Body of pancreas (tissue), 4 donors: ENCODE measurements at regions of chr10 and their contacts with region 1.

Region 1: DNA sequence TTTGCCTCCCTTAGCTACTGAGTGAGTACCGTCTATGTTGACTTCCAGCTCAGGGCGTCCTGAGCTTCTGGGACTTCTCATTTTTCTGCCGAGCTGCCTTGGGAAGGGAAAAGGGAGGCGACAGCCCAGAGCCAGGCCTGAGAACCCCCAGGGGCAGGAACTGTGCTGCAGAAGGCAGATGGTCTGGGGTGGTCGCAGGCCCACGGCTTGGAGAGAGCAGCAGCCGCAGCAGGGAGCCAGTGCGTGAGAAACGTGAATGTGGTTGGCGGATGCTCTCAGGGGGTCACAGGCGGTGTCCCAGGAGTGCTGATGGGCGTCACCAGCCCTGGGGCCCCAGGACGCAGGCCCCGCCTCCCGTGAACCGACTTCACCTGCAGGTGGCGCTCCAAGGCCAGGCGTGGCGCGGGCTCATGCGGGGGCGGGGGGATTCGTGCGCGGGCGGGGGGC is 9.2 kb upstream of the PWWP2B start:
- DNase-seq: peak; percentile 68 to 82 (median 78)
- ATAC-seq: peak; percentile 53
- H3K4me3 ChIP-seq: no peak overlapping the region
- H3K27ac ChIP-seq: peak overlapping the region in 2 of 4 donors; percentile 41 to 55
- H3K4me1 ChIP-seq: peaks cover 18% of the 10 kb centered on the region
- H3K27me3 ChIP-seq: no peaks in the 10 kb centered on the region
- CTCF ChIP-seq: peak; percentile 49 to 83 (median 73)
- POLR2A ChIP-seq: no peak

Region 2: DNA sequence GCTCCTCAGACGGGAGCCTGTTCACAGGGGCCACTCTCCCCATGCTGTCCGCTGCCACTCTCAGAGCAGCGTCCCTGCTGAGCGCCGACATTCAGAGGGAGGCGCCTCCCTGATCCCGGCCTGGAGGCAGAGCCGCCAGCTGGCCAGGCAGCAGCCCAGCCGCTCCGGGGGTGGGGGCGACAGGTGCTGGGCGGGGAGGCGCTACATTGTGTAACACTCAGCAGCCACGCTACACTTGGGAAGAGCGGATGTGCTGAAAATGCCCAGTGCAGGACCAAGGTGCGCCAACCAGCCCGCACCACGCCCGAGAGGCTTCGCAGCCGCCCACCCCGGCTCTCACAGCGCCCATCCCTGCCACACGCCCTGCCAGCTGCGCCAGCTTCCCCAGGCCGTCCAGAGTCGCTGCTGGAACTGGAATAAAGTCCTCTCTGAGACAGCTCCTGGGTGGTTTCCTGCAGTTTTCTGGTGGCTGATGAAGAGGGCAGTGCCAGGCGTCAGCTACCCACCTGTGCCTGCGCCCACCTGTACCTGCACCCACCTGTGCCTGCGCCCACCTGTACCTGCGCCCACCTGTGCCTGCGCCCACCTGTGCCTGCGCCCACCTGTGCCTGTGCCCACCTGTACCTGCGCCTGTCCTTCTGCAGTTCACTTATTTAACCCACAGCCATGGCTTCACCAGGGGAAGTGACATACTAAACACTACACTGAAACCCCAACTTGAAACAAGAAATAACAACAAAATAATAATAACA is 105.7 kb before region 1 on chr10:
- intact Hi-C with region 1: no loop called
- DNase-seq: no peak
- ATAC-seq: no peak
- H3K4me3 ChIP-seq: no peak overlapping the region
- H3K27ac ChIP-seq: no peak overlapping the region
- H3K4me1 ChIP-seq: no peaks in the 10 kb centered on the region
- H3K27me3 ChIP-seq: no peaks in the 10 kb centered on the region
- CTCF ChIP-seq: no peak
- POLR2A ChIP-seq: no peak

Region 3: GRCh38 chr10:132452631-132453469 is 65.1 kb after region 1 on chr10:
- intact Hi-C with region 1: loop called (anchors 2 kb)
- DNase-seq: peak; percentile 92 to 97 (median 94)
- ATAC-seq: peak; percentile 81
- H3K4me3 ChIP-seq: no peak overlapping the region
- H3K27ac ChIP-seq: peak overlapping the region; percentile 23 to 66 (median 54)
- H3K4me1 ChIP-seq: peaks cover 34% of the 10 kb centered on the region
- H3K27me3 ChIP-seq: no peaks in the 10 kb centered on the region
- CTCF ChIP-seq: peak; percentile 96 to 99 (median 98)
- POLR2A ChIP-seq: no peak

Region 4: GRCh38 chr10:132571650-132572535 is 184.1 kb after region 1 on chr10:
- intact Hi-C with region 1: no loop called
- DNase-seq: peak; percentile 59 to 85 (median 68)
- ATAC-seq: peak; percentile 79
- H3K4me3 ChIP-seq: no peak overlapping the region
- H3K27ac ChIP-seq: peak overlapping the region in 3 of 4 donors; percentile 22 to 52 (median 27)
- H3K4me1 ChIP-seq: peaks cover 44% of the 10 kb centered on the region
- H3K27me3 ChIP-seq: no peaks in the 10 kb centered on the region
- CTCF ChIP-seq: no peak
- POLR2A ChIP-seq: no peak

Region 5: DNA sequence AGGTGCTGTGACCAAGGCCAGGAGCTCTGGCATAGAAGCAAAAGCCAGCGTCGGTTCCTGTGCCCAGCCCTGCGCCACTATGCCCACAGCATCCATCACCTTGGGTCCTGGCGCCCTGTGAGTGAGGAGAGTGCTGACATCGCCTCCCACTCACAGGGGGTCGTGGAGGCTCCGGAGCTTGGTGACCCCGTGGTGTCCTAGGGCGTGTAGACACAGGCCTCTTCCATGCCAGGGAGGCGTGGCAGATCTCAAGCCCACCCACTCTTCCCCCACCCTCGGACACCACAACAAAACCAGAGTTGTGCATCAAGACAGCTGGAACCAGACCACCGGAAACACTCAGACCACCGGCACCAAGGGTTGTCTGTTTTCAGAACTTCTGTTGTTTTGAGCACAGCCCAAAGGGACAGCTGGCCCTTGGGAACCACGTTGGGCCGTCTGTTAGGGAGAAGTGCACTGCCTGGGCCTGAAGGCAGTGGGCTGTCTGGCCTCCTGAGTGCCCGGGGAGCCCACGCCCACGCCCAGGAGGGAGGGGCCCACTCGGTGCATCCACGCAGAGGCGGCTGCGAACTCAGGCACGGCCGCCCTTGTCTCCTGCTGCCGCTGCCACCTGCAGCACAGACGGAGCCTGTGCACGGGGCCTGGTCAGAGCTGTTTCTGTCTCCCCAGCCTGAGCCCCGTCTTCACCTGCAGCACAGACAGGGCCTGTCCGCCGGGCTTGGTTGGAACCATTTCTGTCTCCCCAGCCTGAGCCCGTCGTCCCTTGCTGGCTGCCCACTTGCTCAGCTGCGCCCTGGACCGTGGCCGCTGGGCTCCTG is 256.1 kb after region 1 on chr10:
- intact Hi-C with region 1: loop called (anchors 5 kb)
- DNase-seq: peak in 2 of 4 donors; percentile 8 to 9
- ATAC-seq: no peak
- H3K4me3 ChIP-seq: no peak overlapping the region
- H3K27ac ChIP-seq: no peak overlapping the region
- H3K4me1 ChIP-seq: no peaks in the 10 kb centered on the region
- H3K27me3 ChIP-seq: no peaks in the 10 kb centered on the region
- CTCF ChIP-seq: no peak
- POLR2A ChIP-seq: no peak